Right lobe of liver (tissue), 6 donors: ENCODE measurements at regions of chr10 and their contacts with region 1.

Region 1: GRCh38 chr10:80444646-80445319 is 9.3 kb upstream of the TSPAN14 start:
- DNase-seq: peak; percentile 69 to 79 (median 72)
- ATAC-seq: peak; percentile 91 to 96 (median 94)
- H3K4me3 ChIP-seq: no peak overlapping the region
- H3K27ac ChIP-seq: no peak overlapping the region
- H3K4me1 ChIP-seq: no peaks in the 10 kb centered on the region
- H3K27me3 ChIP-seq: no peaks in the 10 kb centered on the region
- CTCF ChIP-seq: peak; percentile 40 to 87 (median 70)
- POLR2A ChIP-seq: no peak

Region 2: DNA sequence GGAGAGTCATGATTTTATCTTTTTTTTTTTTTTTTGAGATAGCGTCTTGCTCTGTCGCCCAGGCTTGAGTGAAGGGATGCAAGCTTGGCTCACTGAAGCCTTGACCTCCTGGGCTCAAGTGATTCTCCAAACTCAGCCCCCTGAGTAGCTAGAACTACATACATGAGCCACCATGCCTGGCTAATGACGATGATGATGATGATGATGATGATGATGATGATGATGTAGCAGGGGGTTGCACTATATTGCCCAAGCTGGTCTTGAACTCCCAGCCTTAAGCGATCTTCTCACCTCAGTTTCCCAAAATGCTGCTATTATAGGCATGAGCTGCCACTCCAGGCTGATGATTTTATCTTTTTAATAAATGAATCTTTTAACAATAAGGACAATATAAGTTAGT is 326.1 kb before region 1 on chr10:
- intact Hi-C with region 1: no loop called
- DNase-seq: no peak
- ATAC-seq: no peak
- H3K4me3 ChIP-seq: no peak overlapping the region
- H3K27ac ChIP-seq: no peak overlapping the region
- H3K4me1 ChIP-seq: no peaks in the 10 kb centered on the region
- H3K27me3 ChIP-seq: no peaks in the 10 kb centered on the region
- CTCF ChIP-seq: no peak
- POLR2A ChIP-seq: no peak

Region 3: GRCh38 chr10:80382989-80383388 is 61.8 kb before region 1 on chr10:
- intact Hi-C with region 1: loop called (anchors 10 kb)
- DNase-seq: no peak
- ATAC-seq: peak; percentile 66 to 73 (median 70)
- H3K4me3 ChIP-seq: no peak overlapping the region
- H3K27ac ChIP-seq: peak overlapping the region in 1 of 3 donors; percentile 16
- H3K4me1 ChIP-seq: peaks cover 0 to 6% (median 0%) of the 10 kb centered on the region in 4 donors
- H3K27me3 ChIP-seq: no peaks in the 10 kb centered on the region
- CTCF ChIP-seq: peak; percentile 72 to 84 (median 79)
- POLR2A ChIP-seq: no peak

Region 4: GRCh38 chr10:80509403-80510161 is 64.8 kb after region 1 on chr10:
- intact Hi-C with region 1: loop called (anchors 5 kb)
- DNase-seq: no peak
- ATAC-seq: peak; percentile 51 to 68 (median 60)
- H3K4me3 ChIP-seq: no peak overlapping the region
- H3K27ac ChIP-seq: peak overlapping the region in 2 of 3 donors; percentile 37 to 53
- H3K4me1 ChIP-seq: peaks cover 0 to 17% (median 5%) of the 10 kb centered on the region in 4 donors
- H3K27me3 ChIP-seq: no peaks in the 10 kb centered on the region
- CTCF ChIP-seq: no peak
- POLR2A ChIP-seq: no peak